ENCODE measurements at regions of chr22 and their contacts with region 1.

Region 1: DNA sequence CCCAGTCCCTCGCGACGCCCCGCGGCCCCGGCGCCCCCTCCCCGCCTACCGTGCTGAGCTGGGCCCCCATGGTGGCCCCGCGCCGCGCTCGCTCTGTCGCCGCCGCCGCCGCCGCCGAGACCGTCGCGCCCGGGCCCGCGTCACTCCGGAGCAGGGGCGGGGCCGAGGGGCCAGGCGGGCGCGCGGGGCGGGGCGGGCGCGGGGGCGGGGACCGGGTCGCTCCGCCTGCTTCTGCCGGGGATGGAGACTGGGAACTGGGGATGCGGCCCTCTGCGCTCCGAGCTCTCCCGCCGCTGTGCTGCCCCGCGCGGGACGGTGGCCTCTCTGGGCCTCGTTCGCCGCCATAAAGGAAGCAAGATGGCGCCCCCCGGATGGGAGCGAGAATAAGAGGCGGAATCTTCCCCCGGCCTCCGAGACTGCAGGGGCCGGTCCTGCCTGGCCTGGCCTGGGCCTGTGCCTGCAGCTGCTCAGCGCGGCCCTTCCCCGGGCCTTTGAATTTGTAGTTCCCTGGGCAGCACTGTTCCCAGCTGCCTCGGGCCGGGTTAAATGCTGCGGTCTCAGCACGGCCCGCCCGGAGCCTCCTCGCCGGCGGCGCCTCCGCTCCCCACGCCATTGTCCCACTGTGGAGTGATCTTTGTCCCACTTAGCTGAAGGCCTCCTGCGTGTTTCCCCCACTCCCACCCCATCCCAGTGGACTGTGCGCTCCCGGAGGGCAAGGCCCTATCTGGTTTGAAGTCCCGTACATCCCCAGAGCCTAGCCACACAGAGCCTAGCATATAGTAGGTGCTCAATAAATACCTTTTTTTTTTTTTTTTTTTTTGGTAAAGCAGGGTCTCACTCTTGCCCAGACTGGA is at the start of gene CYB5R3:
- DNase-seq: peak; percentile 91
- ATAC-seq: peak; percentile 87
- H3K4me3 Mint-ChIP-seq: peak within 1 kb of the TSS; percentile 92
- H3K27ac Mint-ChIP-seq: peak within 1 kb of the TSS; percentile 92
- H3K4me1 Mint-ChIP-seq: peaks cover 22% of the 10 kb centered on the region
- H3K27me3 Mint-ChIP-seq: no peaks in the 10 kb centered on the region
- total RNA-seq, gene CYB5R3: 79.5 to 101 TPM

Region 2: GRCh38 chr22:42079319-42080251 is 569.9 kb before region 1 on chr22 and contains the start of gene SMDT1:
- CTCF ChIA-PET with region 1: no interaction called
- POLR2A ChIA-PET with region 1: no interaction called
- intact Hi-C with region 1: loop called in 1 of 2 experiments (anchors 1 kb)
- DNase-seq: peak; percentile 99
- ATAC-seq: peak; percentile 95
- H3K4me3 Mint-ChIP-seq: peak within 1 kb of the TSS; percentile 90
- H3K27ac Mint-ChIP-seq: peak within 1 kb of the TSS; percentile 96
- H3K4me1 Mint-ChIP-seq: peaks cover 29% of the 10 kb centered on the region
- H3K27me3 Mint-ChIP-seq: no peaks in the 10 kb centered on the region
- total RNA-seq, gene SMDT1: 17.2 to 45.4 TPM

Region 3: GRCh38 chr22:42581762-42582716 is 67.4 kb before region 1 on chr22:
- CTCF ChIA-PET with region 1: no interaction called
- POLR2A ChIA-PET with region 1: no interaction called
- intact Hi-C with region 1: loop called in 1 of 2 experiments (anchors 1 kb)
- DNase-seq: peak; percentile 94
- ATAC-seq: peak; percentile 88
- H3K4me3 Mint-ChIP-seq: peak overlapping the region; percentile 94
- H3K27ac Mint-ChIP-seq: peak overlapping the region; percentile 87
- H3K4me1 Mint-ChIP-seq: peaks cover 9% of the 10 kb centered on the region
- H3K27me3 Mint-ChIP-seq: no peaks in the 10 kb centered on the region

Region 4: DNA sequence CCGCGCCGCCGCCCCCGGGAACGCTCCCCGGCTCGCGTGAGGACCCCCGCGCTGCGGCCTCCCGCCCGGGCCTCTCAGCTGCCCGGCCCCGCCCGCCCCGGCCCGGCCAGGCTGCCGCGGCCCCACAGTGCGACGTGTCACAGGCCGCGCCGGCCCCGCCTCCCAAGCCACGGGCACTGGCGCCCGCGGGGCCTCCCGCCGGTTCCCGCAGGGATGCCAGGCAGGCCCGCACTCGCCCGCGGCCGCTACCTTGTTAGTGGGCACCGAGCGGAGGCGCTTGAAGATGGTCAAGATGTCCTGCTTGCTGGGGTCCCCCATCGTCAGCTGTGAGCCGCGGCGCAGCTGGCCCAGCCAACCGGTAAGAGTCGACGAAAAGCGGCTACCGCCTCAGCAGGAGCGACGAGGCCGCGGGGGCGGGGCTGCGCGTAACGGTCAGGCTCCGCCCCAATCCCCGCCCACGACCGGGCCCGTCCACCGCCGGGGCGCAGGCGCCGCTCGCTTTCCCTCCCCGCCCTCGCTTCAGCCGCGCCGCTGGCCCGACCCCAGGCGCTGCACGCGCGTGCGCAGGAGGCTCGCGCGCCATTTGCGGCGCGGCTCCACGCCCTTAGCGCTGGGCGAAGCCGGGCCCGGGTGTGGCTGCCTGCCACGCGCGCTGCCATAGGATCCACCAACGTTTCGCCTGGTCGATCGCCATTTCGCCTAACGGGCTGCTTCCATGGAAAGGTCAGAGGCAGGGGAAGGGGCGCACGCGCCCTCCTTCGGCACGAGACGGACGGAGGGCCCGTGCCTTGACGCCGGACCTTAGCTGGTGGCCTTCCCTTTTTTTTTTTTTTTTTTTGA is 207.6 kb after region 1 on chr22 and contains the start of gene ARFGAP3:
- CTCF ChIA-PET with region 1: no interaction called
- POLR2A ChIA-PET with region 1: interaction called, 3 read pairs
- intact Hi-C with region 1: loop called in 1 of 2 experiments (anchors 1 kb)
- DNase-seq: peak; percentile 98
- ATAC-seq: peak; percentile 91
- H3K4me3 Mint-ChIP-seq: peak within 1 kb of the TSS; percentile 83
- H3K27ac Mint-ChIP-seq: peak within 1 kb of the TSS; percentile 85
- H3K4me1 Mint-ChIP-seq: peaks cover 11% of the 10 kb centered on the region
- H3K27me3 Mint-ChIP-seq: peaks cover 6% of the 10 kb centered on the region
- total RNA-seq, gene ARFGAP3: 22.5 to 23.0 TPM

Region 5: GRCh38 chr22:43014869-43015676 is 365.6 kb after region 1 on chr22 and contains the start of gene PACSIN2:
- CTCF ChIA-PET with region 1: no interaction called
- POLR2A ChIA-PET with region 1: interaction called, 3 read pairs
- intact Hi-C with region 1: loop called in 1 of 2 experiments (anchors 1 kb)
- DNase-seq: peak; percentile 99
- ATAC-seq: peak; percentile 100
- H3K4me3 Mint-ChIP-seq: peak within 1 kb of the TSS; percentile 90
- H3K27ac Mint-ChIP-seq: peak within 1 kb of the TSS; percentile 82
- H3K4me1 Mint-ChIP-seq: peaks cover 21% of the 10 kb centered on the region
- H3K27me3 Mint-ChIP-seq: no peaks in the 10 kb centered on the region
- total RNA-seq, gene PACSIN2: 27.9 to 28.1 TPM